HepG2 (cell line): ENCODE measurements at regions of chr7 and their contacts with region 1.

Region 1: GRCh38 chr7:123849855-123850254 is 4.9 kb downstream of the HYAL4 start:
- DNase-seq: no peak
- ATAC-seq: no peak
- H3K4me3 ChIP-seq: no peak overlapping the region
- H3K27ac ChIP-seq: no peak overlapping the region
- H3K4me1 ChIP-seq: peaks cover 12% of the 10 kb centered on the region
- H3K27me3 ChIP-seq: no peaks in the 10 kb centered on the region
- CTCF ChIP-seq: no peak
- EP300 ChIP-seq: no peak
- POLR2A ChIP-seq: no peak
- RAD21 ChIP-seq: no peak

Region 2: GRCh38 chr7:124497176-124497575 is 647.3 kb after region 1 on chr7:
- CTCF ChIA-PET with region 1: no interaction called
- POLR2A ChIA-PET with region 1: no interaction called
- in situ Hi-C with region 1: no loop called
- intact Hi-C with region 1: no loop called
- DNase-seq: no peak
- ATAC-seq: no peak
- H3K4me3 ChIP-seq: no peak overlapping the region
- H3K27ac ChIP-seq: no peak overlapping the region
- H3K4me1 ChIP-seq: no peaks in the 10 kb centered on the region
- H3K27me3 ChIP-seq: no peaks in the 10 kb centered on the region
- CTCF ChIP-seq: no peak
- EP300 ChIP-seq: no peak
- POLR2A ChIP-seq: no peak
- RAD21 ChIP-seq: no peak

Region 3: DNA sequence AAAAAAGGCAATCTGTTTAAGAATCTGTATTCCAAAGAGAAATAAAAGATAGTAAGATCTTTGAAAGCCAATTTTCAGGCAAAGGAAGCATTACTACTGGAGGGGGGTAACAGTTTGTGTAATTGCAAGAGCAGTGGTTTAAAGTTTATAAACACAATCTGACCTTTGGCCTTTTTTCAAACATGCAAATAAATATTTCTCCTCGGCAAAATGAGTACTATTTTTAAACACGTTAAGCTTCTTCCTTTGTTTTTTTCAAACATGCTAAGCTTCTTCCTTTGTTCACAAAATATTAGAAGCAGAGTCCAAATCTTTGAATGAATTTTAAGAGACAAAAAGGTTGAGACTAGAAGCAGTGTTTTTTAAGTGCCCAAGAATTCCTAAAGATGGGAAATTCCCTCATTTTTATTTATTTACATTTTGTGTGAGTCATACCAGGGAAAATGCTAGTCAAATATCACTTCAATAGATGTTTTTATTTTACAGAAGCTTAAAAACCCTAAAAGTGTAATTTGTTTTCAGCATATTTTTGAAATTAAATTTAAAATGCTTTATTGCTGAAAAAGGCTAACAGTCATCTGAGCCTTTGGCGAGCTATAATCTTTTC is 686.4 kb after region 1 on chr7:
- CTCF ChIA-PET with region 1: no interaction called
- POLR2A ChIA-PET with region 1: no interaction called
- in situ Hi-C with region 1: no loop called
- intact Hi-C with region 1: loop called (anchors 5 kb)
- DNase-seq: no peak
- ATAC-seq: no peak
- H3K4me3 ChIP-seq: no peak overlapping the region
- H3K27ac ChIP-seq: no peak overlapping the region
- H3K4me1 ChIP-seq: peaks cover 14% of the 10 kb centered on the region
- H3K27me3 ChIP-seq: no peaks in the 10 kb centered on the region
- CTCF ChIP-seq: no peak
- EP300 ChIP-seq: no peak
- POLR2A ChIP-seq: no peak
- RAD21 ChIP-seq: no peak